Caco-2 (cell line): ENCODE measurements at regions of chr2 and their contacts with region 1.

Region 1: DNA sequence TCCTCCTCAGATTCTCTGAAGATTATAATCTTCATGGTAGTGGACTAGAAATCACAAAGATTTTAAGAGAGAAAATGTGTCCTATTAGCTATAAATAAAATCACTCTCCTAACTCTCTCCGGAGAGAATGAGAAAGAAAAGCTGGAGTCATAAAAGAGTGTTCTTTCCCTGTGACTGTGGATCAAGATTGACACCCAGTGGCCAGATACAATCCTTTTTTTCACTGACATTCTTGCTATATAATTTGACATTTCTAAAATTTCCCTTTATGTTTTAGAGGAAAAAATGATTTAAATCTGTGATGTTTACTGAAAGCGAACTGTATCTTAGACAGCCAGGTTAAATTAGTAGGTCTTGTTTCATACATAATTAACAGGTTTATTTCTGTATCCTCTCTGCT is 35.4 kb upstream of the LRP2 start:
- DNase-seq: peak in 1 of 2 experiments; percentile 48
- H3K4me3 ChIP-seq: no peak overlapping the region
- H3K4me3 Mint-ChIP-seq: no peak overlapping the region
- H3K27ac Mint-ChIP-seq: no peak overlapping the region
- H3K4me1 ChIP-seq: peaks cover 35% of the 10 kb centered on the region
- H3K4me1 Mint-ChIP-seq: peaks cover 30% of the 10 kb centered on the region
- H3K27me3 ChIP-seq: no peaks in the 10 kb centered on the region
- H3K27me3 Mint-ChIP-seq: peaks cover 3% of the 10 kb centered on the region
- CTCF ChIP-seq: peak; percentile 61 to 64

Region 2: GRCh38 chr2:168961450-168962229 is 436.1 kb before region 1 on chr2:
- CTCF ChIA-PET with region 1: no interaction called
- POLR2A ChIA-PET with region 1: no interaction called
- intact Hi-C with region 1: loop called (anchors 2 kb)
- DNase-seq: peak; percentile 40 to 73
- H3K4me3 ChIP-seq: no peak overlapping the region
- H3K4me3 Mint-ChIP-seq: no peak overlapping the region
- H3K27ac Mint-ChIP-seq: no peak overlapping the region
- H3K4me1 ChIP-seq: no peaks in the 10 kb centered on the region
- H3K4me1 Mint-ChIP-seq: no peaks in the 10 kb centered on the region
- H3K27me3 ChIP-seq: no peaks in the 10 kb centered on the region
- H3K27me3 Mint-ChIP-seq: peaks cover 3% of the 10 kb centered on the region
- CTCF ChIP-seq: peak; percentile 76 to 80

Region 3: DNA sequence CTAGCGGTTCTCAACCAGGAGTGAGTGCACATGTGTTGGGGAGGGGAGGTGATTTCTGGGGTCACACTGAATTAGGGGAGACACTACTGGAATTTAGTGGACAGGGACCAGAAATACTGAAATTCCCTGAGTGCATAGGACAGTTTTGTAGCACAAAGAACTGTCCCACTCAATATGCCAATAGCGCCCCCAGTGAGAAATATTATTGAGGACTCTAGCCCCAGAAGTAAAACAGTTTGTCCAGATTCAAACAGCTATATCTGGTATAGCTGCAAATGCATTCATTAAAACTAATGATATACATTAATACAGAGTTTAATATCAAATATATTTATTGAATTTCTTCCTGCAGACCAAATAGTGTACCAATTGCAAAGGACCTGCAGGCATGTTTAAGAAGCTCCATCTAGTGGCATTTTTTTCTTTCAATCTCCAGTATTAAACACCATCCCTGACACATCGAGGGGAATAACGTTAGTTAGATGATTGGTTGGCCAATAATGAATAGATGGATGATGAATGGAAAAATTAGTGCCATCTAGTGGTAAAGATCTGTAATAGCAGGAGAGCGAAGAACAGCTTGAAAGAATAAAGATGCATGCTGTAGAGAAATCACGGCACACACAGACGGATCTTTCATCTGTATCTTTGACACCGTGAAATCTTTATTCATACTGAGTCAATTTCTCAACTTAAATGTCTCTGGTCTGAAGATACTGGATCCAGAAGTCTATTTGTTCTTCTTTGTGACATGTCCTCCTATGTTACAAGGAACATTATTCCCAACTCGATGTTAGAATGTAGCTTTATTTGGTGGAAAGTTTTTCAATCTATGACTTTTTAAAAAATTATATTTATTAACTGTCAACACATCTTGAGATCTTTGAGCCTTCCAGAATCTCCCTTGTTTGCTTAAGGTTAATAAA is 265.8 kb before region 1 on chr2:
- CTCF ChIA-PET with region 1: interaction called, 4 read pairs
- POLR2A ChIA-PET with region 1: no interaction called
- intact Hi-C with region 1: loop called (anchors 5 kb)
- DNase-seq: peak in 1 of 2 experiments; percentile 39
- H3K4me3 ChIP-seq: no peak overlapping the region
- H3K4me3 Mint-ChIP-seq: no peak overlapping the region
- H3K27ac Mint-ChIP-seq: no peak overlapping the region
- H3K4me1 ChIP-seq: no peaks in the 10 kb centered on the region
- H3K4me1 Mint-ChIP-seq: no peaks in the 10 kb centered on the region
- H3K27me3 ChIP-seq: no peaks in the 10 kb centered on the region
- H3K27me3 Mint-ChIP-seq: no peaks in the 10 kb centered on the region
- CTCF ChIP-seq: peak; percentile 63 to 79

Region 4: DNA sequence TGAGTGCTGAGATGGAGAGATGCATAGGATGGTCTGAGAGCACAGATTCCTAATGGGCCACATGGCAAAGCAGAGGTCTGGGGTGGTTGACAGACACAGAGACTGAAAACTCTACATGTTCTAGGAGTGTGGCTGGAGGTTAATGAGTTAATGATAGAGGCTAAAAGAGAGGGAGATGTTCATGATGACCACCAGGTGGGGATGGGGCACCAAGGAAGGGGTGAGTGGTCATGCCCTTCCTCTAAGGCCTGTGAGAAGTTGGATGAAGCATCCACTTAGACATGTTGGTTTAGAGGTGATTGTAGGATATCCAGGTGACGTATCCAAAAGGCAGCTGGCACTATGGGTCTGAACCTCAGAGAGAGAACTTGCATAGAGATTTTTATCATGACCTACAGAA is 137.5 kb before region 1 on chr2:
- CTCF ChIA-PET with region 1: no interaction called
- POLR2A ChIA-PET with region 1: no interaction called
- intact Hi-C with region 1: loop called (anchors 1 kb)
- DNase-seq: peak in 1 of 2 experiments; percentile 49
- H3K4me3 ChIP-seq: no peak overlapping the region
- H3K4me3 Mint-ChIP-seq: no peak overlapping the region
- H3K27ac Mint-ChIP-seq: peak overlapping the region; percentile 1
- H3K4me1 ChIP-seq: peaks cover 24% of the 10 kb centered on the region
- H3K4me1 Mint-ChIP-seq: peaks cover 33% of the 10 kb centered on the region
- H3K27me3 ChIP-seq: no peaks in the 10 kb centered on the region
- H3K27me3 Mint-ChIP-seq: no peaks in the 10 kb centered on the region
- CTCF ChIP-seq: peak in 1 of 2 experiments; percentile 48

Region 5: DNA sequence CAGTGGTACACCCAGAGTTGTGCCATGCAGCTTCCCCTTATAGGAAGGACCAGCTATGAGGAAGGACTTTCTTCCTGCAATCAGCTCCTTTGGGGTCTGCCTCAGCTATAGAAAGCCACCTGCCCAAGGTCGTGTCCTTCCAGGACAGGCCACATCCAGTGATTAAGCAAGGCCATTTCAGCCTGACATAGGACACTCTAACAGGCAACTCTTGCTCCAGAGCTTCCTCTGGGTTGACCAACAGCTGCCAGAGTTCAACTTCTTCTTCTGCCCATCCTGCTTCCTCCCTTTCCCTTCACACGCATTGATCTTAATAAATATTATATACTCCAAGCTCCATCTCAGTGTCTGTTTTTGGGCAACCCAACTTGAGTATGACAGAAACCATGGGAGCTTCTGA is 48.2 kb before region 1 on chr2:
- CTCF ChIA-PET with region 1: no interaction called
- POLR2A ChIA-PET with region 1: no interaction called
- intact Hi-C with region 1: no loop called
- DNase-seq: no peak
- H3K4me3 ChIP-seq: no peak overlapping the region
- H3K4me3 Mint-ChIP-seq: no peak overlapping the region
- H3K27ac Mint-ChIP-seq: no peak overlapping the region
- H3K4me1 ChIP-seq: peaks cover 24% of the 10 kb centered on the region
- H3K4me1 Mint-ChIP-seq: peaks cover 18% of the 10 kb centered on the region
- H3K27me3 ChIP-seq: no peaks in the 10 kb centered on the region
- H3K27me3 Mint-ChIP-seq: no peaks in the 10 kb centered on the region
- CTCF ChIP-seq: no peak

Region 6: DNA sequence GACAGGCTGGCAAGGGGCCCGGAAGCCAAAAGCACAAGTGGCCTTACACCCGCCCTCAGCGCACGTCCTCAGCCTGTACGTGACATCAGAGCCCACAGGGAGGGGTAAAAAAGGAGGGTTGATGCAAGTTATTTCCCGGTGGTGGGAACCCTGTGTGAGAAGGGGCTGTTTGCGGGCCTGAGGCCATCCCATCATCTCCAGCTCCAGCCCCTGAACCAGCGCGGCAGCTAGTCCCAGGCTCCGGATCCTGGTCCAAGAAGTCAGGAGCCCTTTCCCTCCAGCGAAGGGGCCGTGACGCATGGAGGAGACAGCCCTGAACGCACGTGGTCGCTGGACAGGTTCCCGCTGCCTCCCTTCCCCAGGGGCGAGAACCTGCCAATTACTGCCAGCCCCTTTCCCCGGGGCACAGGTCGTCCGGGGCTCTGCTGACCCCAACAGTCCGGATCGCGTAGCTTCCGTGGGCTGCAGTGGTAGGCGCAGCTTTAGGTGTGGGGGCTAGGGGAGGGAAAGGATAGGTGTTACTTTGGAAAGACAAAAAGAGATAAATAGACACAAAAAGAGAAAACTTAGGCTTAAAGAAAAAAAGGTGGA is 34.0 kb before region 1 on chr2:
- CTCF ChIA-PET with region 1: interaction called, 10 read pairs
- POLR2A ChIA-PET with region 1: interaction called, 12 read pairs
- intact Hi-C with region 1: loop called (anchors 1 kb)
- DNase-seq: peak; percentile 78 to 84
- H3K4me3 ChIP-seq: peak overlapping the region; percentile 44
- H3K4me3 Mint-ChIP-seq: peak overlapping the region; percentile 95
- H3K27ac Mint-ChIP-seq: peak overlapping the region; percentile 75
- H3K4me1 ChIP-seq: peaks cover 9% of the 10 kb centered on the region; the same call in 1 of the 2 replicates
- H3K4me1 Mint-ChIP-seq: peaks cover 7% of the 10 kb centered on the region
- H3K27me3 ChIP-seq: no peaks in the 10 kb centered on the region
- H3K27me3 Mint-ChIP-seq: no peaks in the 10 kb centered on the region
- CTCF ChIP-seq: peak in 1 of 2 experiments; percentile 4

Region 7: GRCh38 chr2:169446452-169446851 is 48.8 kb after region 1 on chr2:
- CTCF ChIA-PET with region 1: no interaction called
- POLR2A ChIA-PET with region 1: no interaction called
- intact Hi-C with region 1: no loop called
- DNase-seq: no peak
- H3K4me3 ChIP-seq: no peak overlapping the region
- H3K4me3 Mint-ChIP-seq: no peak overlapping the region
- H3K27ac Mint-ChIP-seq: no peak overlapping the region
- H3K4me1 ChIP-seq: no peaks in the 10 kb centered on the region
- H3K4me1 Mint-ChIP-seq: no peaks in the 10 kb centered on the region
- H3K27me3 ChIP-seq: no peaks in the 10 kb centered on the region
- H3K27me3 Mint-ChIP-seq: peaks cover 6% of the 10 kb centered on the region
- CTCF ChIP-seq: no peak